Left cardiac atrium (tissue), 4 donors: ENCODE measurements at regions of chr9 and their contacts with region 1.

Region 1: DNA sequence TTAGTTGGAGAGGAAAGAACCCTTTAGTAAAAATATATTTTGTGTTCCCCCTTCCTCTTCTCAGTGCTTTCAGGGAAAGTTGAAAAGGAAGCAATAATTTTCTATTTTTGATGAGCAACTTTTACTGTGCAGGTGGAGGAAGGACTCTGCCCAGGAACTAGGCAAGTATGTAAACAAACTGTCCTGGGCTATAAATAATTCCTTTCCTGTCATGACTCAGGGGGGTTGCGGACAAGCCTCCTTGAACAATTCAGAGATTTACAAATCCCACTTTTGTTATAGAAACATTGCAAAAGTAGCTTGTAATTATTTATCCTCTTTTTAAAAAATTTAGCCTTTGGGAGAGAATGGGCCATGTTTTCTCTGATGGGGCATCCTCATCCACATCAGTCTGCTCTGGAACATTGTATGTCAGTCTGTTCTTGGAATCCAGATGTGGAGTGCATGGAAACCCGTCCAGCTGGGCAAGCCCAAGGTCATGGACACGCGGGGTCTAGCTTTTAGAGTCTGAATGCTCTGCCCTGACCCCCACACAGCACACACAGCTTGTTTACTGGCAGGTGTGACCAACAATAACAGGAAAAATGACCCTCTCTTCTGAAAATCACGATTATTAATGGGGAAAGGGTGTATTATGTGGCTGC is 127.6 kb downstream of the GADD45G start:
- DNase-seq: no peak
- ATAC-seq: peak in 1 of 2 donors; percentile 33

Region 2: GRCh38 chr9:89437000-89437631 is 295.3 kb before region 1 on chr9:
- intact Hi-C with region 1: no loop called
- DNase-seq: no peak
- ATAC-seq: peak in 1 of 2 donors; percentile 46

Region 3: DNA sequence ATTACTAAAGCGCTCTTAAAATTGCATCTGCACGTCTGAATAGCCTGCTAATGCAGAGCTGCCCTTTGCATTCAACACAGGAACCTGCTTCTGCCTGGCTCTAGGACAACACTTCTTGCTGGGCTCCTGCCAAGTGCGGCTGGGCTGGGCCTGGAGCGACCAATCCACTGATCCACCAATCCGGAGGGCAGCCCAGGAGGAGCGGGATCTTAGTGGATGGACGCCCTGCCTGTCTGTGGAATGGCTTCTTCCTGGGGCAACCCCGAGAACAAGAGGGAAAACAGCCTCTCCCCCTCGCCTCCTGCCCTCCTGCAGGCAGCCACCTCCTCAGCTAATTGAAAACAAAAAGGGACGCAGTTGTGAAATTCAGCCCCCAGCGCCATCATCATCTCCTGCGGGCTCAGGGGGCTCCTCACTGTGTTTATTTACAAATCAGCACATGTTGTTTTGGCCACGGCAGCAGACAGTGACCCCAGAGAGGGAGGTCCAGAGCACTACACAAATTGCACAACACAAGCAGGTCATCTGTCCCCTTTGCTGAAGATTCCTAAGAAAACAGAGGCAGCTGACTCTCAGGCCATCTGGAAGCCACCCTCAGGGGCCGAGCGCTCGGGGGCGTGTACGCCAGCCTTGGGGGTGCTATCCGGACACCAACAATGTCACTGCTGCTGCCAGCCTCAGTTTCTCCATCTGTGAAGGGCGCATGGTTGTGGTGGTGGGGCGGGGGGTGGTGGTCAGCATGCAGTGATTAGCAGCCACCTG is 70.3 kb before region 1 on chr9:
- intact Hi-C with region 1: loop called in 1 of 2 experiments (anchors 5 kb)
- DNase-seq: peak; percentile 98
- ATAC-seq: peak; percentile 97 to 98

Region 4: GRCh38 chr9:89684901-89685636 is 47.3 kb before region 1 on chr9:
- intact Hi-C with region 1: loop called in 1 of 2 experiments (anchors 5 kb)
- DNase-seq: peak; percentile 63
- ATAC-seq: peak; percentile 80 to 92

Region 5: GRCh38 chr9:90053027-90053426 is 320.6 kb after region 1 on chr9:
- intact Hi-C with region 1: no loop called
- DNase-seq: no peak
- ATAC-seq: no peak